Gastrocnemius medialis (tissue), 4 donors: ENCODE measurements at regions of chr17 and their contacts with region 1.

Region 1: GRCh38 chr17:7484067-7484918 is at the start of gene POLR2A:
- DNase-seq: peak; percentile 96 to 99
- ATAC-seq: peak; percentile 71 to 76
- H3K4me3 ChIP-seq: peak within 1 kb of the TSS; percentile 82 to 90 (median 86)
- H3K27ac ChIP-seq: peak within 1 kb of the TSS; percentile 100
- H3K4me1 ChIP-seq: peaks cover 49 to 70% of the 10 kb centered on the region in 2 donors
- H3K27me3 ChIP-seq: no peaks in the 10 kb centered on the region
- CTCF ChIP-seq: no peak
- POLR2A ChIP-seq: peak; percentile 100
- total RNA-seq, gene POLR2A: 20.3 to 56.9 (median 39.3) TPM

Region 2: GRCh38 chr17:6651357-6651918 is 832.9 kb before region 1 on chr17 and contains the starts of genes C17orf100 and MED31:
- in situ Hi-C with region 1: no loop called
- intact Hi-C with region 1: loop called (anchors 5 kb)
- DNase-seq: peak; percentile 88 to 94
- ATAC-seq: peak; percentile 93 to 96
- H3K4me3 ChIP-seq: peak within 1 kb of the TSS; percentile 60 to 95 (median 86)
- H3K27ac ChIP-seq: peak within 1 kb of the TSS; percentile 80 to 93 (median 86)
- H3K4me1 ChIP-seq: peaks cover 25 to 33% of the 10 kb centered on the region in 2 donors
- H3K27me3 ChIP-seq: peaks cover 12 to 18% (median 17%) of the 10 kb centered on the region in 3 donors
- CTCF ChIP-seq: no peak
- POLR2A ChIP-seq: peak; percentile 57 to 81
- total RNA-seq, gene C17orf100: 0.27 TPM in 1 of 4 donors, not detected in the others
- total RNA-seq, gene MED31: 3.8 to 8.6 (median 7.2) TPM

Region 3: DNA sequence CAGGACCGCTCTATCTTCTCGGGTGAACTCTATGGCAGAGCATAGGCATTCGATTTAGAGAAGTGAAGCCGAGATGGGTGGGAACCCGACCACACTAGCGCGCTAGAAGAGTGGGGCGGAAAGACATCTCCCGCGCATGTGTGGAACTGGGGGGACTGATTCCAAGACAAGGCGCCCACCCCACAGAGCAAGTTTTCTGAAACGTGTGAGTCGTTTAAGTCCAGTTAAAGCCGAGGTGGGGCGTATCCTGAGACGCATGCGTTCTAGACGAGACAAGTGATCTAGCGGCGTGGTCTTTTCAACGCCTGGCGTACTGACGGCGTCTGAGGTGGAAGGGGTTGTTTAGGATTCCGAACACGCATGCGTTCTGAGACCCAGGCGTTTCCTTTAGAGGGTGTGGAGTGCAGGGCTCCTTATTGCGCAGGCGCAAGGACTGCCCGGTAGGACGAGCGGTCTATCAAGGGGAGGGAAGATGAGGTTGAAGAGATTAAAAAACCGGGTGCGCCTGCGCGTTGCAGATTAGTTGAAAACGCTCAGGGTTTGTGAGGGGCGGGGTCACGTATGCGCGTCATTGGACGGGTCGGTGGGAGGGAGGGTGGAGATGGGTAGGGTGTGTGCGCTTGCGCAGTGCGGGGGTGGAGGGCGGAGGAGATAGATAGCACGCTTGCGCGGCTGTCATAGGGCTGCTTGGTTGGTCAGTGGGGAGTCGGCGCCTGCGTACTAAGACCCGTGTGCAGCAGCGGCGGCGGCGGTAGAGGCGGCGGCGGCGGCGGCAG is 177.2 kb before region 1 on chr17 and contains the start of gene EIF5A:
- in situ Hi-C with region 1: no loop called
- intact Hi-C with region 1: loop called (anchors 1 kb)
- DNase-seq: peak; percentile 100
- ATAC-seq: peak; percentile 82 to 84
- H3K4me3 ChIP-seq: peak within 1 kb of the TSS; percentile 79 to 98 (median 84)
- H3K27ac ChIP-seq: peak within 1 kb of the TSS; percentile 93 to 99 (median 98)
- H3K4me1 ChIP-seq: peaks cover 29 to 31% of the 10 kb centered on the region in 2 donors
- H3K27me3 ChIP-seq: no peaks in the 10 kb centered on the region
- CTCF ChIP-seq: no peak
- POLR2A ChIP-seq: peak; percentile 95 to 96
- total RNA-seq, gene EIF5A: 115 to 384 (median 273) TPM

Region 4: DNA sequence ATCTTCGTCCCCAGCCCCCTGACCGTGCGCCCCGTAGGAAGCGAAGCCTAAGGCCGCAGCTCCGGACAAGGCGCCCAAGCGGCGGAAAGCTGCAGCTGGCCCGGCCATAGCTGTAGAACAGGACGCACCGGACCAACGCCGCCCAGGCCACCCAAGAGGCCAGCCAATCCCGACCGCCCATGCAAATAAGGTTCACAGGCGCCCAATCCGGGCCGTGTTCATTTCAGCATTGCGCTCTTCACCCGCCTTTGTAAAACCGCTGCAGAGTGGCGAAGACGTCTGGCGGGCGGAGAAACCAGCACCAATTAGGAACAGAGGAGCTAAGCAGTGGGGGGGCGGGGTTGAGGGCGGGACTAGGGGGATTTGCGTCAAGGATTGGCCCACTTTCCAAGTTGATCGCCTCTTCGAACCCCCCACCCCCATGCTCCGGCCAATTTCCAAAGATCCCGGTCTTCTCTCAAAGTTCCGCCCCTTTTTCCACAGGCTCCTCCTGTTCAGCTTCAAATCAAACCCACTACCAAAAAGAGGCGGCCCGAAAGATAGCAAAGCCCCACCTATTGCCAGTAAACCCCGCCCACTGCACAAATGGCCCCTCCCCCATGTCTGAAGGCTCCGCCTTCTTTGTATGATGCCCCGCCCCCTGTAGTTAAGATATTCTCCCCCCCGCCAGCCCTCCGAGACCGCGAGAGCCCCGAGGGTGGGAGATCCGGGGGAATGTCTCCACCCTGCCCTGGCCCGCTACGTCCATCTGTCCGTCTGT is 80.1 kb before region 1 on chr17 and contains the start of gene TMEM256:
- in situ Hi-C with region 1: no loop called
- intact Hi-C with region 1: loop called (anchors 1 kb)
- DNase-seq: peak; percentile 100
- ATAC-seq: peak; percentile 90
- H3K4me3 ChIP-seq: peak within 1 kb of the TSS; percentile 62 to 81 (median 70)
- H3K27ac ChIP-seq: peak within 1 kb of the TSS; percentile 92 to 97 (median 92)
- H3K4me1 ChIP-seq: peaks cover 19 to 20% of the 10 kb centered on the region in 2 donors
- H3K27me3 ChIP-seq: no peaks in the 10 kb centered on the region
- CTCF ChIP-seq: peak in 2 of 5 experiments; percentile 13 to 22
- POLR2A ChIP-seq: peak; percentile 94 to 96
- total RNA-seq, gene TMEM256: 28.9 to 65.6 (median 50.2) TPM

Region 5: DNA sequence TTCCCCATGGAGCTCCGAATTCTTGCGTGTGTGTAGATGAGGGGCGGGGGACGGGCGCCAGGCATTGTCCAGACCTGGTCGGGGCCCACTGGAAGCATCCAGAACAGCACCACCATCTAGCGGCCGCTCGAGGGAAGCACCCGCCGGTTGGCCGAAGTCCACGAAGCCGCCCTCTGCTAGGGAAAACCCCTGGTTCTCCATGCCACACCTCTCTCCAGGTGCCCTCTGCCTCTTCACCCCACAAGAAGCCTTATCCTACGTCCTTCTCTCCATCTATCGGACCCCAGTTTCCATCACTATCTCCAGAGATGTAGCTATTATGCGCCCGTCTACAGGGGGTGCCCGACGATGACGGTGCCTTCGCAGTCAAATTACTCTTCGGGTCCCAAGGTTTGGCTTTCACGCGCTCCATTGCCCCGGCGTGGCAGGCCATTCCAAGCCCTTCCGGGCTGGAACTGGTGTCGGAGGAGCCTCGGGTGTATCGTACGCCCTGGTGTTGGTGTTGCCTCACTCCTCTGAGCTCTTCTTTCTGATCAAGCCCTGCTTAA is 76.8 kb after region 1 on chr17:
- in situ Hi-C with region 1: no loop called
- intact Hi-C with region 1: loop called (anchors 1 kb)
- DNase-seq: peak; percentile 87 to 93
- ATAC-seq: peak; percentile 83
- H3K4me3 ChIP-seq: peak overlapping the region; percentile 87 to 95 (median 88)
- H3K27ac ChIP-seq: peak overlapping the region; percentile 93 to 96 (median 96)
- H3K4me1 ChIP-seq: peaks cover 48 to 62% of the 10 kb centered on the region in 2 donors
- H3K27me3 ChIP-seq: no peaks in the 10 kb centered on the region
- CTCF ChIP-seq: peak; percentile 90 to 91 (median 90)
- POLR2A ChIP-seq: no peak

Region 6: GRCh38 chr17:7606280-7606679 is 122.0 kb after region 1 on chr17:
- in situ Hi-C with region 1: no loop called
- intact Hi-C with region 1: no loop called
- DNase-seq: peak in 1 of 2 donors; percentile 57
- ATAC-seq: peak; percentile 98 to 99
- H3K4me3 ChIP-seq: no peak overlapping the region
- H3K27ac ChIP-seq: peak overlapping the region; percentile 71 to 91 (median 76)
- H3K4me1 ChIP-seq: peaks cover 36 to 40% of the 10 kb centered on the region in 2 donors
- H3K27me3 ChIP-seq: no peaks in the 10 kb centered on the region
- CTCF ChIP-seq: no peak
- POLR2A ChIP-seq: no peak

Region 7: GRCh38 chr17:8156246-8156992 is 672.1 kb after region 1 on chr17:
- in situ Hi-C with region 1: no loop called
- intact Hi-C with region 1: loop called (anchors 2 kb)
- DNase-seq: peak; percentile 100
- ATAC-seq: peak; percentile 53 to 63
- H3K4me3 ChIP-seq: peak overlapping the region; percentile 96 to 97 (median 96)
- H3K27ac ChIP-seq: peak overlapping the region; percentile 99 to 100 (median 100)
- H3K4me1 ChIP-seq: peaks cover 34 to 39% of the 10 kb centered on the region in 2 donors
- H3K27me3 ChIP-seq: no peaks in the 10 kb centered on the region
- CTCF ChIP-seq: peak in 2 of 5 experiments; percentile 11 to 25
- POLR2A ChIP-seq: peak; percentile 100